CD4-positive, alpha-beta memory T cell (primary cell): ENCODE measurements at regions of chr19 and their contacts with region 1.

Region 1: DNA sequence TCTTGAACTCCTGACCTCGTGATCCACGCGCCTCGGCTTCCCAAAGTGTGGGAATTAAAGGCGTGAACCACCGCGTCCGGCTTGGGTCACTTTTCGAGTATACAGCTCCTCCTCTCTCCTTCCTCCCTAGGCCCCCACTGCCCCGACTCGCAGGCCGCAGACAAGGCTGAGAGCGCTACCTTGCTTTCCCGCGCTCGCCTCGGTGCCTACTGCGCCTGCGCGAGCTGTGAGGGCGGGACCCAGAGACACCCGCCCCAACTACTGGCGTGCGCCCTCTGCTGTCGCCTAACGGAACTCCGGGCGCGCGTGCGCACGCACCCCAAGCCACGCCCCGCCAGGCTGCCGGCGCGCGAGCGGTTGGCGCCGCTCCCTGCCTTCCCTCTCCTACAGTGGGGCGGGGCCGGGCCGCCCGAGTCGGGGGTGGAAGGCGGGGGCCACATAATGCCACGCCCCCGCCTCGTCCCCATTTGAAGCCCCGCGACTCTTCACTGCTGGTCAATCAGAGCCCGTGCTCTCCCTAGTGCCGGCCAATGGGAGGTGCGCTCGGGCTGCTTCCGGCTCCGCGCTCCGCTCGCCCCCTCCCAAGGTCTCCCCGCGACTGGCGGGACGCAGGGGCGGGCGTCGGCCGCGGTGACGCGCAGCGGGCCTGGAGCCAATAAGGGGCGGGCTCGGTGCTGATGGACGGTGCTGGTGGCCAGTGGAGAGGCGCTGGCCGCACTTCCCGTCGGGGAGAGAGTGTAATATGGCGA is at the start of gene RAB8A:
- DNase-seq: peak; percentile 99 to 100 (median 99)
- H3K4me3 ChIP-seq: peak within 1 kb of the TSS; percentile 78 to 86
- H3K4me3 Mint-ChIP-seq: peak within 1 kb of the TSS; percentile 96 to 99 (median 98)
- H3K27ac ChIP-seq: peak within 1 kb of the TSS; percentile 94
- H3K27ac Mint-ChIP-seq: peak within 1 kb of the TSS; percentile 96 to 99 (median 98)
- H3K4me1 ChIP-seq: peaks cover 46% of the 10 kb centered on the region
- H3K4me1 Mint-ChIP-seq: peaks cover 20 to 50% (median 37%) of the 10 kb centered on the region in 4 donors
- H3K27me3 ChIP-seq: no peaks in the 10 kb centered on the region
- H3K27me3 Mint-ChIP-seq: no peaks in the 10 kb centered on the region
- total RNA-seq, gene RAB8A: 85.5 to 86.9 TPM

Region 2: DNA sequence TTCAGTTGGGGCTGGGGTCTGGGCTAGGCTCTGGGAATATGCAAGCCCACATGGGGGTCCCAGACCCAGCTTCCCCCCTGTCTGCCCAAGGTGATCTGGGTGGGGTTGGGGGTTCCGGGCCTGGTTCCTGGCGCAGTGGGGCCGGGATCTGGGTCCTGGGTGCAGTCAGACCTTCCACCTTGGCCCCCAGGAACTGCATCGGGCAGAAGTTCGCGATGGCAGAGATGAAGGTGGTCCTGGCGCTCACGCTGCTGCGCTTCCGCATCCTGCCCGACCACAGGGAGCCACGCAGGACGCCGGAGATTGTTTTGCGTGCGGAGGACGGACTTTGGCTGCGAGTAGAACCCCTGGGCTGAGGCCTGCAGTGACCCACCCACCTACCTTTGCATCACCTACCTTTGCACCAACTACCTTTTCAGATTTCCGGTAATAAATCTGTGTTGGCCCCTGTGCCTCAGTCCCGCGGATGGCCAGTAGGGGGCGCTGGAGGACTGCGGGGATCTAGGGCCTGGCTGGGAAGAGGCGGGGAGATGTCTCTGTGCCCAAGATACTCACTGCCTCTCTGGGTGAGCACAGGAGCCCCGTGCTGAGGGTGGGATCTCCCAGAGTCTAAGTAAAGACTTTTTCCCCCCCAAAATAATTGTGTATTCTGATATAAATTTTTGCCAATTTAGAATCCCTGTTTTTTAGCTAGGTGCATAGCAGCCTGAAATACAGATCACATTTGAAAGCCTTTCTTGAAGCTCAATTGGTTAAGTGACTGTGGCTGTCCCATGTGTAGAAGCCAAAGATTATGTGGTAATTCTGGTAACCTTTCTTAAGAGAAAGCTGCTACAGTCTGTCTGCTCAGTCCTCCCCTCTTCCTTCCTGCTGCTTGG is 482.1 kb before region 1 on chr19:
- CTCF ChIA-PET with region 1: no interaction called
- POLR2A ChIA-PET with region 1: no interaction called
- intact Hi-C with region 1: loop called (anchors 1 kb)
- DNase-seq: peak; percentile 80 to 86 (median 81)
- H3K4me3 ChIP-seq: no peak overlapping the region
- H3K4me3 Mint-ChIP-seq: no peak overlapping the region
- H3K27ac ChIP-seq: no peak overlapping the region
- H3K27ac Mint-ChIP-seq: no peak overlapping the region
- H3K4me1 ChIP-seq: peaks cover 14% of the 10 kb centered on the region
- H3K4me1 Mint-ChIP-seq: peaks cover 2 to 13% (median 9%) of the 10 kb centered on the region in 4 donors
- H3K27me3 ChIP-seq: no peaks in the 10 kb centered on the region
- H3K27me3 Mint-ChIP-seq: peaks cover 3 to 14% of the 10 kb centered on the region in 2 donors

Region 3: GRCh38 chr19:15945301-15945700 is 166.0 kb before region 1 on chr19:
- CTCF ChIA-PET with region 1: no interaction called
- POLR2A ChIA-PET with region 1: no interaction called
- intact Hi-C with region 1: no loop called
- DNase-seq: no peak
- H3K4me3 ChIP-seq: no peak overlapping the region
- H3K4me3 Mint-ChIP-seq: no peak overlapping the region
- H3K27ac ChIP-seq: no peak overlapping the region
- H3K27ac Mint-ChIP-seq: no peak overlapping the region
- H3K4me1 ChIP-seq: no peaks in the 10 kb centered on the region
- H3K4me1 Mint-ChIP-seq: no peaks in the 10 kb centered on the region
- H3K27me3 ChIP-seq: no peaks in the 10 kb centered on the region
- H3K27me3 Mint-ChIP-seq: peaks cover 28 to 30% of the 10 kb centered on the region in 2 donors

Region 4: DNA sequence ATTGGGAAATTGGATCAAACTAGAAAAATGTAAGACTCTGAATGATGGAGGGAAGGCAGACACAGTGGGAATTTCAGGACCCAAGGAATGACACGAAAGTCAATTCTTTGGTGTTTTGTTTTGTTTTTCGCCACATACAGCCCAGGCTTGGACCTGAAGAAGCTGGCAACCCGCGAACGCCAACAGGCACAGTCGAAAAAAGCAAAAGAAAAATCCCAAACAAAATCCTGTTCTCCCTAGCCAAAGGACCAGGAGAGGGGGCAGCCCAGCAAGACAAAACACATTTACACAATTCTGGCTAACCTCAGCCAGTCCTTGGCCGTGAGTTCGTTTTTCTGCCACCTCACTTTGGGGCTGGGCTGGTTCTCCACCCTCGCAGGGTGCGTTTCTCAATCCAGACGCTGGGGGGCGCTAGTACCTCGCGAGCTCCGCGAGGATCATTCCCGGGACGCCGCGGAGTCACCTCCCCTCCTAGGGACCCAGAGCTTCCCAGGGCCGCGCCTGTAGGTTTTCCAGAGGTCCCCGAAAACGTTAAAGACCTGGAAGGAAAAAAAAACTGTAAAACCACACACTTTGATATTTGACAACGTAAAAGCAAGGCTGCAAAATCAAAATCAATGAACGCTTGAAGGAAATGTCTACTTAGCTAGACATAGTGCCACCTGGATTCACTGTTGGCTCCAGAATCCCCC is 69.9 kb before region 1 on chr19:
- CTCF ChIA-PET with region 1: interaction called, 17 read pairs
- POLR2A ChIA-PET with region 1: interaction called, 6 read pairs
- intact Hi-C with region 1: loop called (anchors 1 kb)
- DNase-seq: peak; percentile 60 to 75 (median 66)
- H3K4me3 ChIP-seq: no peak overlapping the region
- H3K4me3 Mint-ChIP-seq: peak overlapping the region in 6 of 8 donors; percentile 7 to 63 (median 29)
- H3K27ac ChIP-seq: no peak overlapping the region
- H3K27ac Mint-ChIP-seq: peak overlapping the region in 1 of 7 donors; percentile 29
- H3K4me1 ChIP-seq: peaks cover 10% of the 10 kb centered on the region
- H3K4me1 Mint-ChIP-seq: peaks cover 7 to 17% (median 12%) of the 10 kb centered on the region in 4 donors
- H3K27me3 ChIP-seq: no peaks in the 10 kb centered on the region
- H3K27me3 Mint-ChIP-seq: peaks cover 0 to 1% of the 10 kb centered on the region in 2 donors

Region 5: DNA sequence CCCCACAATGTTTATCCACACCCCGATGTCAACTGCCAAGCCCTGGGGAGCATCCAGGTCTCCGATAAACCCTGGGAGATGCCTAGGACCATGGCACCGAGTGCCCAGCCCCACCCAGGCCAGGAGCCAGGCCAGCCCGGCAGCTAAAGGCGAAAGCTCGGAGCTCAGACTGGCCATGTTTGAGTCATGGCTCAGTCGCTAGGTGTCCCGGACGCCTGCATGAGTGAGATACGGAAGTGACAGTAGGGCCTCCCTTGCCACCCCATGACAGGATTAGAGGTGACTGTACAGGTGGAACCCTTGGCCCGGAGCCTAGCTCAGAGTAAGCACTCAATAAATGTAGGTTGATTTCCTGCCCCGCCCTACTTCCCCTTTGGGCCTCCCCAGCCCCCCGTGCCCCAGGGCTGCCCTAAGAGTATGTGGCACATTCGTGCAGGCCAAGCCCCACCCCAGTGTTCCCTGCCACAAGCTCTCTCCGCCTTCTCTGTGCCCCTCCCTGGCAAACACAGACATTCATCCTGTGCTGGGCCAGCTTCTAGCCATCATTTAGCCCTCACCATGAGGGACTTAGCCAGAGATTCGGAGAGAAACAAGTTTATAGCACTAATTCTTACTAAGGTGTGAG is 40.9 kb before region 1 on chr19:
- CTCF ChIA-PET with region 1: interaction called, 84 read pairs
- POLR2A ChIA-PET with region 1: interaction called, 49 read pairs
- intact Hi-C with region 1: loop called (anchors 1 kb)
- DNase-seq: peak; percentile 87 to 98 (median 94)
- H3K4me3 ChIP-seq: peak overlapping the region in 1 of 2 donors; percentile 46
- H3K4me3 Mint-ChIP-seq: peak overlapping the region in 3 of 8 donors; percentile 60 to 80 (median 77)
- H3K27ac ChIP-seq: peak overlapping the region; percentile 89
- H3K27ac Mint-ChIP-seq: no peak overlapping the region
- H3K4me1 ChIP-seq: peaks cover 78% of the 10 kb centered on the region
- H3K4me1 Mint-ChIP-seq: peaks cover 25 to 46% (median 38%) of the 10 kb centered on the region in 4 donors
- H3K27me3 ChIP-seq: no peaks in the 10 kb centered on the region
- H3K27me3 Mint-ChIP-seq: no peaks in the 10 kb centered on the region

Region 6: GRCh38 chr19:16088351-16089009 is 22.9 kb before region 1 on chr19:
- CTCF ChIA-PET with region 1: interaction called, 30 read pairs
- POLR2A ChIA-PET with region 1: interaction called, 37 read pairs
- intact Hi-C with region 1: no loop called
- DNase-seq: peak in 1 of 5 donors; percentile 10
- H3K4me3 ChIP-seq: no peak overlapping the region
- H3K4me3 Mint-ChIP-seq: peak overlapping the region in 4 of 8 donors; percentile 15 to 54 (median 34)
- H3K27ac ChIP-seq: no peak overlapping the region
- H3K27ac Mint-ChIP-seq: peak overlapping the region; percentile 61 to 82 (median 72)
- H3K4me1 ChIP-seq: peaks cover 53% of the 10 kb centered on the region
- H3K4me1 Mint-ChIP-seq: peaks cover 27 to 58% (median 36%) of the 10 kb centered on the region in 4 donors
- H3K27me3 ChIP-seq: no peaks in the 10 kb centered on the region
- H3K27me3 Mint-ChIP-seq: no peaks in the 10 kb centered on the region

Region 7: DNA sequence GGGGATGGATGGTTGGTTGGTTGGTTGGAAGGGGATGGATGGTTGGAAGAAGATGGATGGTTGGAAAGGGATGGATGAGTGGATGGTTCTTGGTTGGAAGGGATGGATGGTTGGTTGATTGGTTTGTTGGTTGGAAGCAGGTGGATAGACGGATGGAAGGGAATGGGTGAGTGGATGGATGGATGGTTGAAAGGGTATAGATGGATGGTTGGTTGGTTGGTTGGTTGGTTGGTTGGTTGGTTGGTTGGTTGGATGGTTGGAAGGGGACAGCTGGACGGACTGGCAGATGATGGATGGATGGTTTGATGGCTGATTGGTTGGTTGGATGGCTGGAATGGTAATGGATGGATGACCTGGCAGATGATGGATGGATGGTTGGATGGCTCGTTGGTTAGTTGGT is 20.3 kb after region 1 on chr19:
- CTCF ChIA-PET with region 1: no interaction called
- POLR2A ChIA-PET with region 1: no interaction called
- intact Hi-C with region 1: no loop called
- DNase-seq: no peak
- H3K4me3 ChIP-seq: no peak overlapping the region
- H3K4me3 Mint-ChIP-seq: no peak overlapping the region
- H3K27ac ChIP-seq: no peak overlapping the region
- H3K27ac Mint-ChIP-seq: peak overlapping the region in 3 of 7 donors; percentile 10 to 84 (median 58)
- H3K4me1 ChIP-seq: no peaks in the 10 kb centered on the region
- H3K4me1 Mint-ChIP-seq: peaks cover 0 to 4% (median under 1%) of the 10 kb centered on the region in 4 donors
- H3K27me3 ChIP-seq: no peaks in the 10 kb centered on the region
- H3K27me3 Mint-ChIP-seq: no peaks in the 10 kb centered on the region

Region 8: GRCh38 chr19:16143399-16144245 is 32.3 kb after region 1 on chr19 and contains the start of gene HSH2D:
- CTCF ChIA-PET with region 1: interaction called, 3 read pairs
- POLR2A ChIA-PET with region 1: interaction called, 10 read pairs
- intact Hi-C with region 1: loop called (anchors 1 kb)
- DNase-seq: peak; percentile 76 to 87 (median 79)
- H3K4me3 ChIP-seq: peak within 1 kb of the TSS; percentile 74 to 84
- H3K4me3 Mint-ChIP-seq: peak within 1 kb of the TSS; percentile 91 to 97 (median 95)
- H3K27ac ChIP-seq: peak within 1 kb of the TSS; percentile 82
- H3K27ac Mint-ChIP-seq: peak within 1 kb of the TSS; percentile 83 to 99 (median 96)
- H3K4me1 ChIP-seq: peaks cover 42% of the 10 kb centered on the region
- H3K4me1 Mint-ChIP-seq: peaks cover 20 to 51% (median 33%) of the 10 kb centered on the region in 4 donors
- H3K27me3 ChIP-seq: no peaks in the 10 kb centered on the region
- H3K27me3 Mint-ChIP-seq: no peaks in the 10 kb centered on the region
- total RNA-seq, gene HSH2D: 17.8 to 18.8 TPM

Region 9: GRCh38 chr19:16371540-16371986 is 260.2 kb after region 1 on chr19:
- CTCF ChIA-PET with region 1: no interaction called
- POLR2A ChIA-PET with region 1: no interaction called
- intact Hi-C with region 1: loop called (anchors 2 kb)
- DNase-seq: peak; percentile 95 to 97 (median 95)
- H3K4me3 ChIP-seq: peak overlapping the region in 1 of 2 donors; percentile 47
- H3K4me3 Mint-ChIP-seq: no peak overlapping the region
- H3K27ac ChIP-seq: peak overlapping the region; percentile 89
- H3K27ac Mint-ChIP-seq: no peak overlapping the region
- H3K4me1 ChIP-seq: peaks cover 98% of the 10 kb centered on the region
- H3K4me1 Mint-ChIP-seq: peaks cover 0 to 60% (median 31%) of the 10 kb centered on the region in 4 donors
- H3K27me3 ChIP-seq: no peaks in the 10 kb centered on the region
- H3K27me3 Mint-ChIP-seq: no peaks in the 10 kb centered on the region